ENCODE measurements at regions of chr17 and their contacts with region 1.

Region 1: GRCh38 chr17:57995076-57995956 is 7.3 kb upstream of the VEZF1 start:
- DNase-seq: no peak
- ATAC-seq: peak; percentile 87
- H3K4me3 ChIP-seq: no peak overlapping the region
- H3K27ac ChIP-seq: no peak overlapping the region
- H3K4me1 ChIP-seq: peaks cover 22% of the 10 kb centered on the region
- H3K27me3 ChIP-seq: no peaks in the 10 kb centered on the region
- CTCF ChIP-seq: peak; percentile 69 to 81 (median 75)
- EP300 ChIP-seq: no peak
- POLR2A ChIP-seq: peak; percentile 81
- RAD21 ChIP-seq: peak; percentile 83

Region 2: DNA sequence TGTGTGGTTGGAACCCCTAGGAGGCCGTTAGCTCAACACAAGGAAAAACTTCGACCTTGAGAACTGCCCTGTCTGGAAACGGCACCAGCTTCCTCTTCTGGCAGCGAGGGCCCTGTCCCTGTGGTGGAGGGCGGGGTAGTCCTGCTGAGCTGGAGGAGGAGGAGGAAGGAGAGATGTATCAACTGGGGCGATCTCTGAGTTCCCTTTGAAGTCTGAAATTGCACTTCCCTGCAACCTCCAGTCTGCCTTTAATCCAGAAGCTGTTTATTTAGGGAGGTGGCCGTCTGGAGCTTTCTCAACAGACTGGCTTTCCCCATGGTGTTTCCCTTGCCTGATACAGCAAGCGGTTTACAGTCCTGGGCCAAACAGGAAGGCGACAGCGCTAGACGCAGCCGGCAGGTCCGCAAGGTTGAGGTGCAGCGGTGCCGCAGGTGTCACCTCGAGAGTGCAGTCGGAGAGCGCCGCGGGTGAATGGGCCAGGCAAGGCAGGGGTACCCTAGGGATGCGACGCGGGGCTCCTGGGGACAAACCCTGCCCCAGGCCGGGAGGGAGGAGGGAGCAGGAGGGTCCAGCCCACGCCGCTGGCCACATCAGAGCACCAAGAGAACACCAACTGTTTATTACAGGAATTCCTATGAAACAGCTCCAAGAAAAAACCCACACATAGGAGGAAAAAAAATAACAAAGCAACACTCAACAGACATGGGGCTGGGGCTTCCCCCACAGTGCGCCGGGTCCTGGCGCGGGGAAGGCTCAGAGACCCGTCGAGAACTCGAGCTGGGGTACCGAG is 134.1 kb before region 1 on chr17:
- CTCF ChIA-PET with region 1: interaction called, 708 read pairs
- POLR2A ChIA-PET with region 1: interaction called, 17 read pairs
- RAD21 ChIA-PET with region 1: interaction called, 239 read pairs
- SMC1A ChIA-PET with region 1: interaction called, 341 read pairs
- in situ Hi-C with region 1: no loop called
- intact Hi-C with region 1: loop called (anchors 1 kb)
- DNase-seq: no peak
- ATAC-seq: peak; percentile 67
- H3K4me3 ChIP-seq: peak overlapping the region; percentile 38; the same call in 1 of the 2 replicates
- H3K27ac ChIP-seq: no peak overlapping the region
- H3K4me1 ChIP-seq: peaks cover 3% of the 10 kb centered on the region; the same call in 1 of the 2 replicates
- H3K27me3 ChIP-seq: no peaks in the 10 kb centered on the region; a peak in 2 of 4 replicates
- CTCF ChIP-seq: no peak
- EP300 ChIP-seq: no peak
- POLR2A ChIP-seq: no peak
- RAD21 ChIP-seq: no peak

Region 3: GRCh38 chr17:57892146-57892828 is 103.0 kb before region 1 on chr17:
- CTCF ChIA-PET with region 1: interaction called, 92 read pairs
- POLR2A ChIA-PET with region 1: interaction called, 7 read pairs
- RAD21 ChIA-PET with region 1: interaction called, 25 read pairs
- SMC1A ChIA-PET with region 1: interaction called, 111 read pairs
- in situ Hi-C with region 1: loop called (anchors 10 kb)
- intact Hi-C with region 1: loop called (anchors 2 kb)
- DNase-seq: no peak
- ATAC-seq: peak; percentile 91
- H3K4me3 ChIP-seq: no peak overlapping the region
- H3K27ac ChIP-seq: no peak overlapping the region
- H3K4me1 ChIP-seq: peaks cover 19% of the 10 kb centered on the region
- H3K27me3 ChIP-seq: no peaks in the 10 kb centered on the region
- CTCF ChIP-seq: peak; percentile 91 to 99 (median 99)
- EP300 ChIP-seq: no peak
- POLR2A ChIP-seq: no peak
- RAD21 ChIP-seq: peak; percentile 88

Region 4: GRCh38 chr17:57939797-57940196 is 55.5 kb before region 1 on chr17:
- CTCF ChIA-PET with region 1: interaction called, 55 read pairs
- POLR2A ChIA-PET with region 1: interaction called, 5 read pairs
- RAD21 ChIA-PET with region 1: interaction called, 17 read pairs
- SMC1A ChIA-PET with region 1: interaction called, 33 read pairs
- in situ Hi-C with region 1: no loop called
- intact Hi-C with region 1: no loop called
- DNase-seq: peak; percentile 75
- ATAC-seq: peak; percentile 87
- H3K4me3 ChIP-seq: no peak overlapping the region; the same call in 1 of the 2 replicates
- H3K27ac ChIP-seq: no peak overlapping the region
- H3K4me1 ChIP-seq: peaks cover 45% of the 10 kb centered on the region
- H3K27me3 ChIP-seq: no peaks in the 10 kb centered on the region
- CTCF ChIP-seq: no peak
- EP300 ChIP-seq: peak; percentile 66; a peak in 2 of 4 replicates
- POLR2A ChIP-seq: no peak
- RAD21 ChIP-seq: no peak

Region 5: DNA sequence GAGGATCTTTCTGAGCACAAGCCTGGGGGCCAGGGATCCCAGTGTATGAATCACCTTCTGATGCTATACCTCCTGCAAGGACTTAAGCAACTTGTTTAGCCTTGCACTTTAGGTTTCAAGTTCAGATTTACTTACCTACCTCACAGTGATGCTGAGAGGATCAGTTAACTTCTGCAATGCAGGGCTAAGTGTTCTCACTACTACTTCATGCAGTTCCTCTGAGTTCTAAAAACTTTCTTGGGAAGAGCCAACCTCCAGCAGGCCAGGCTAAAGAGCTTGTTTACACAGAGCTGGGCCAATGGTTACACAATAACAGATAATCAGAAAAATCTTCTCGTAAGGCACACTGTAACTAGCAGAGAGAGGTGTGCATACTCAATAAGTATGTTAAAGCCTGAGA is 20.3 kb before region 1 on chr17:
- CTCF ChIA-PET with region 1: interaction called, 195 read pairs
- POLR2A ChIA-PET with region 1: interaction called, 5 read pairs
- RAD21 ChIA-PET with region 1: interaction called, 4 read pairs
- SMC1A ChIA-PET with region 1: interaction called, 72 read pairs
- in situ Hi-C with region 1: no loop called
- intact Hi-C with region 1: no loop called
- DNase-seq: no peak
- ATAC-seq: no peak
- H3K4me3 ChIP-seq: no peak overlapping the region
- H3K27ac ChIP-seq: no peak overlapping the region
- H3K4me1 ChIP-seq: no peaks in the 10 kb centered on the region
- H3K27me3 ChIP-seq: no peaks in the 10 kb centered on the region
- CTCF ChIP-seq: no peak
- EP300 ChIP-seq: no peak
- POLR2A ChIP-seq: no peak
- RAD21 ChIP-seq: no peak

Region 6: GRCh38 chr17:58019039-58019438 is 23.7 kb after region 1 on chr17:
- CTCF ChIA-PET with region 1: interaction called, 15 read pairs
- POLR2A ChIA-PET with region 1: no interaction called
- RAD21 ChIA-PET with region 1: no interaction called
- SMC1A ChIA-PET with region 1: no interaction called
- in situ Hi-C with region 1: no loop called
- intact Hi-C with region 1: no loop called
- DNase-seq: no peak
- ATAC-seq: no peak
- H3K4me3 ChIP-seq: no peak overlapping the region
- H3K27ac ChIP-seq: no peak overlapping the region
- H3K4me1 ChIP-seq: no peaks in the 10 kb centered on the region
- H3K27me3 ChIP-seq: no peaks in the 10 kb centered on the region
- CTCF ChIP-seq: no peak
- EP300 ChIP-seq: no peak
- POLR2A ChIP-seq: no peak
- RAD21 ChIP-seq: no peak

Region 7: DNA sequence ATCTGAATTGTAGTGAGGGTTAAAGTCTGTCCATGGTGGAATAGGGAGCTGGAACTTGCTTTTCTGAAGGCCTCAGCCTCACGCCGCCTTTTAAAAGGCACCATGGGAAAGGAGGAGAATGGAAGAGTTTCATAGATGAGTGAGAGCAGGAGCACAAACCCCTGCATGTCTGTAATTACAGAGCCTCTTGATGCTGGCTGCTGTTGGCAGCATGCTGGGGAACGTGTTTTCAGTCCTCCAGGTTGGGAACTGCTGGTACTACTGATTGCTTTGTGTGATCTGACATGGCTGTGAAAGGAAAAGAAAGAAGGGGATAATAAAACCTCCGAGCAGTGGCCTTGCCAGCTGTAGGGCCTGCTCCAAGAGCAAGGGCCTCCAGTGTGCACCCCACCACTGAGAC is 71.1 kb after region 1 on chr17:
- CTCF ChIA-PET with region 1: no interaction called
- POLR2A ChIA-PET with region 1: no interaction called
- RAD21 ChIA-PET with region 1: no interaction called
- SMC1A ChIA-PET with region 1: no interaction called
- in situ Hi-C with region 1: no loop called
- intact Hi-C with region 1: no loop called
- DNase-seq: no peak
- ATAC-seq: no peak
- H3K4me3 ChIP-seq: no peak overlapping the region
- H3K27ac ChIP-seq: no peak overlapping the region
- H3K4me1 ChIP-seq: no peaks in the 10 kb centered on the region
- H3K27me3 ChIP-seq: peaks cover 0 to 3% of the 10 kb centered on the region in 2 experiments; a peak in 3 of 4 replicates
- CTCF ChIP-seq: no peak
- EP300 ChIP-seq: no peak
- POLR2A ChIP-seq: no peak
- RAD21 ChIP-seq: no peak